Activated naive CD4-positive, alpha-beta T cell treated with anti-CD3 and anti-CD28 coated beads for 36 hours (primary cell): ENCODE measurements at regions of chr6 and their contacts with region 1.

Region 1: DNA sequence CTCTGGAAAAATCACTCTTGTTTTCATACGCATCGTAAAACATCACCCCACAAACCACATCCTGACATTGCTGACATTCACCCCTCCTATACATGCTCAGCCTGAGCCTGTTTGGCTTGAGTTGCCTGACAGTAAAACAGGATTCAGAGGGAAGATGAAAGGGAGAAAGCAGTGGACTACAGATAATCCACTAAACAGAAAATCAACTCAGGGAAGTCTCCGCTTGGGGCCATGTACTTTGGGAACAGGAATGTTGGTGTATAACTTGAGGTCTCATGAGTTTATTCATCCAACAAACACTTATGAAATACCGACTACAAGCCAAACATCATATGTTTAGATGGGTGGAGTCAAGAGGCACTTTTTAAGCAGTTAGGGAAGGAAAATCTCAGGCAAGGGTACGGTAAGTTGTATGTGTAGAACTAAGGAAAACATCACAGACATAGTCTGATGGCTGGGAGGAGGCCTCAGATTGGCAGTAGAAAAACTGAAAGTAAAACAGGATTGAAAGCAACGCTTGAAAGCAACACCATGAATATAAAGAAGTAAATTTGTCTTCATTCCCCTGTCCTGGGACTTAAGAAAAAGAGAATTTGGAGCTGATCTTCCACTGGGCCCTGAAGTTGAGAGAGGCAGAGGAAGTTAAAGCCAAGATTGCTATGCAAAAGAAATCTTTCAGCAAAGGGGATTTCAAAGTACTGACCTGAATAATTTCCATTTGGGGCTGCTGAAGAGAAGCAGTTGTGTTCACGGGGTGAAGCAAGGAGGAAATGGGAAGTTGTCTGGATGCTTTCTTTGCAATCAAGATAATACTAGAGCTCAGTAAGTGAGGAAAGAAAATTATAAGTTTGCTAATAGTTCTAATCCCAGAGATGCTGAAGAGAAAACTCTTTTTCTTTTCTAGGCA is 28.8 kb downstream of the PDE7B start:
- DNase-seq: peak; percentile 75
- H3K4me3 Mint-ChIP-seq: peak overlapping the region; percentile 77
- H3K27ac Mint-ChIP-seq: peak overlapping the region; percentile 98
- H3K4me1 Mint-ChIP-seq: peaks cover 64% of the 10 kb centered on the region
- H3K27me3 Mint-ChIP-seq: no peaks in the 10 kb centered on the region

Region 2: DNA sequence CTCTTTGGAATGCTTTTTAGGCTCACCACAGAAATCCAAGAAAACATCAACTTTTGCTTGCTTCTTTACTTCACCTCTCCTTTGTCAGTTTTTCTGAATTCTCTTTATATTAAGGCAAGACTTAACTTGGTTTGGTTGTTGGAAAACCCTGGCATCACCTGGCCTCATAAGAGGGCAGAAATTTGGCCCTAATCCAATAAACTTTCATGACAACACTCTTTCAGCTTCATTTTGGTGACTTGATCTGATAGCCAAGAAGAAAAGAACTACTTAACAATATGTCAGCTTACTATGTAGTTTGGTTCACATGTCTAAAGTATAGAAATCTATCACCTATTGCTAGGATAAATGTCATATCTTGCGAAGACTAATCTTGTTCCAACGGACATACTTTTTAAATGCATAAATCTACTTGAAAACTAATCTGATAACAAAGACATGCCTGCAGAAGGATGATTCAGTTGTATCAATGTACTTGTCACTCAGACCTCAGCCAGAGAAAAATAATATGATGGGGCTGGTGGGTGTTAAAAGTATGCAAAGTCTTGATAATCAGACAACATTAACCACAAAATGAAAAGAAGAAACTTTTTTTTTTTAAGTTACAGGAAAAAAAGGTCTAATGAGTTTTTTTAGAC is 806.4 kb before region 1 on chr6:
- CTCF ChIA-PET with region 1: no interaction called
- intact Hi-C with region 1: no loop called
- DNase-seq: no peak
- H3K4me3 Mint-ChIP-seq: no peak overlapping the region
- H3K27ac Mint-ChIP-seq: no peak overlapping the region
- H3K4me1 Mint-ChIP-seq: peaks cover 19% of the 10 kb centered on the region
- H3K27me3 Mint-ChIP-seq: no peaks in the 10 kb centered on the region

Region 3: GRCh38 chr6:135782546-135782945 is 97.8 kb before region 1 on chr6:
- CTCF ChIA-PET with region 1: no interaction called
- intact Hi-C with region 1: no loop called
- DNase-seq: no peak
- H3K4me3 Mint-ChIP-seq: no peak overlapping the region
- H3K27ac Mint-ChIP-seq: no peak overlapping the region
- H3K4me1 Mint-ChIP-seq: no peaks in the 10 kb centered on the region
- H3K27me3 Mint-ChIP-seq: no peaks in the 10 kb centered on the region

Region 4: DNA sequence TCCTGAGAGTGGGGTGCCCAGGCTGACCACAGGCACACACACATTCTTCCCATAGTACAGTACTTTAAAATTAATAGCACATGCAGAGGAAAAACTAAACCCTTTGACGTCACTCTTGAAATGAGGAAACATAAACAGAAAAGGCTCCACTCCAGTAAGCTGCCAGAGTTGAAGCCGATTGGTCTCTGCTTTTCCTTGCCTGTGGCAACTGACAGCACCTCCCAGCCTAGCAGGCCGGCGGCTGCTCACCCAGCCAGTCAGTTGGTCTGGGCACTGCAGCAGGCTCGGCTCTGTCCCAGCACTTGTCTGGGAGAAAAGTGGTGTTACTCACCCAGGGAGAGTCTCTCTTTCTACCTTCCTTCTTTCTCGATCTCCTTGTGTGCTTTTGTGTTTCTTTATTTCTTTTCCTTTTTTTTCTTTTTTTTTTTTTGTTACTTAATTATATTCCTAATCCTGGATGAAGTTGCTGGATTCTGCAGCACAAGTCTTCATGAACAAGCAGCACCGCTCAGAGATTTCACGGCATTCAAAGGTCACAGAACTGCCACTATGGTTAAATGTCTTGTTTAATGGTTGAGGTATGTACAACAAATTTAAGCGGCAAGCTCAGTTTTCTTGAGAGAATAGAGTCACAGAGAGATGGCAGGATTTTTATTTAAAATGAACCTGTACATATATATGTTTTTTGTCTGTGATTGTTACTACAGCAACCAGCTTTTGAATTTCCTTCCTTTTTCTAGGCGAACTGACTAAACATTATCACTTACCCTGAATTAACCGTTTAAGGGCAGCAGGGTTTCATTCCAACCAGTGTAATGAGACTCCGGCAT is 28.7 kb before region 1 on chr6 and contains the start of gene PDE7B:
- CTCF ChIA-PET with region 1: no interaction called
- intact Hi-C with region 1: loop called (anchors 1 kb)
- DNase-seq: peak; percentile 65
- H3K4me3 Mint-ChIP-seq: peak within 1 kb of the TSS; percentile 62
- H3K27ac Mint-ChIP-seq: no peak within 1 kb of the TSS
- H3K4me1 Mint-ChIP-seq: peaks cover 34% of the 10 kb centered on the region
- H3K27me3 Mint-ChIP-seq: no peaks in the 10 kb centered on the region
- total RNA-seq, gene PDE7B: 0.25 to 0.31 TPM

Region 5: GRCh38 chr6:135901774-135902524 is 21.6 kb after region 1 on chr6:
- CTCF ChIA-PET with region 1: interaction called, 3 read pairs
- intact Hi-C with region 1: loop called (anchors 1 kb)
- DNase-seq: peak; percentile 70
- H3K4me3 Mint-ChIP-seq: no peak overlapping the region
- H3K27ac Mint-ChIP-seq: peak overlapping the region; percentile 30
- H3K4me1 Mint-ChIP-seq: peaks cover 29% of the 10 kb centered on the region
- H3K27me3 Mint-ChIP-seq: no peaks in the 10 kb centered on the region

Region 6: GRCh38 chr6:135951169-135951568 is 70.8 kb after region 1 on chr6:
- CTCF ChIA-PET with region 1: no interaction called
- intact Hi-C with region 1: no loop called
- DNase-seq: no peak
- H3K4me3 Mint-ChIP-seq: no peak overlapping the region
- H3K27ac Mint-ChIP-seq: no peak overlapping the region
- H3K4me1 Mint-ChIP-seq: no peaks in the 10 kb centered on the region
- H3K27me3 Mint-ChIP-seq: no peaks in the 10 kb centered on the region

Region 7: DNA sequence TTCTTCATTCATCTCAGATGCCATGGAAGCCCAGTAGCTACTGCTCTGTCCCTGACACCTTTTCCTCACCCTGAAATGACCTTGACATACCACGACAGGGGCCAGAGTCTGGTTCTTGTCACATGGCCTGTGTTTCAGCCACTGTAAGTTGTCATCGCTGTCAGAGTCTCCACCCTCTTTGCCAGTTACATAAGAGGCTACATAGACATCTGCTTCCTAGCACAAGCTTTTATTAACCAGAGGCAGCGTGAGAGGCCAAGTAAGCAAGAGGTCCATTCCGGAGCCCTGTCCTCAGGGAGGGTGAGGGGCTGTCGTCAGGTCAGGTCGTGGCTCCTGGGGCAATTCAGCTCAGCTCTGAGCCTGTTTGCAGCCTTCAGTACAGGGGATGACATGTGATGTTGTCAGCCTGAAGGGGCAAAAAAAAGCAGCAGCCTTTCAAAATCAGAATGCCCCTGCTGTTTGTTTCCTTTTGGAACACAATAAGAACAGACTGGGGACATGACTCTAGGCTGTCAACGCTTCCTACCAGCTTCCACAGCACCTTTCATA is 223.5 kb after region 1 on chr6:
- CTCF ChIA-PET with region 1: no interaction called
- intact Hi-C with region 1: no loop called
- DNase-seq: no peak
- H3K4me3 Mint-ChIP-seq: no peak overlapping the region
- H3K27ac Mint-ChIP-seq: no peak overlapping the region
- H3K4me1 Mint-ChIP-seq: no peaks in the 10 kb centered on the region
- H3K27me3 Mint-ChIP-seq: no peaks in the 10 kb centered on the region